Heart left ventricle (tissue), 16 donors: ENCODE measurements at regions of chr6 and their contacts with region 1.

Region 1: GRCh38 chr6:165662749-165663282 is at the start of gene PDE10A:
- DNase-seq: peak; percentile 81 to 88 (median 84)
- ATAC-seq: peak; percentile 52 to 83 (median 73)
- H3K4me3 ChIP-seq: peak within 1 kb of the TSS; percentile 66 to 93 (median 80)
- H3K27ac ChIP-seq: peak within 1 kb of the TSS; percentile 57 to 98 (median 94)
- H3K4me1 ChIP-seq: peaks cover 0 to 48% (median 20%) of the 10 kb centered on the region in 12 donors
- H3K27me3 ChIP-seq: peaks cover 0 to 51% (median 19%) of the 10 kb centered on the region in 9 donors
- CTCF ChIP-seq: peak in 4 of 12 donors; percentile 14 to 26 (median 18)
- POLR2A ChIP-seq: peak in 1 of 2 donors; percentile 24
- total RNA-seq, gene PDE10A: 8.6 to 22.4 (median 12.8) TPM

Region 2: DNA sequence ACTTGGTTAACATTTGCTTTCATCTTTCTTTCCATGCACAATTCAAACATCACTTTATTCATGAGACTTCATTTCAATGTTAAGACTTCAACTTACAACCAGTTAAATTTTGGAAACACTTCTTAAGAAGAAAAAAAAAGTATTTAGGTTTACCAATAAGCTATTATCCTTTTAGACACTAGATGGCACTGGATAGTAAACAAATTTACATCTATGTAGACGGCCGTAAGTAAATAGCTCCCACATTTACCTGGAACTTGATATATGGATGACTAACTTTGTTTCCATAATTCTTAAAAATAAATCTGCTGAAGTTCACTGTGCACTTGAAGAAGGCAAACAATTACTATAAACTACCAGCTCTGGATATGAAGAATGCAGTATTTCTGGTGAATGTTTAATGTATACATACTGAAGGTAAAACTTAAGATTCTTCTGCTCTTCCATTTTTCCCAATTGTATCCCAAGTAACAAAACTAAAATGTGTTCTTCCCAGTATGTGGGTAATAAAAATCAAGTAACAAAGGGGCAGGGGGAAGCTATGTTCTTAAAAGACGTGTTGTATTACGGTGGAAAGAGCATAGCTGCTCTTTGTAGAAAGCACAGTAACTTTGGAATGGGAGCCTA is 222.8 kb before region 1 on chr6:
- intact Hi-C with region 1: loop called in 8 of 10 experiments (anchors 2 to 10 kb)
- DNase-seq: no peak
- ATAC-seq: peak in 2 of 4 donors; percentile 48 to 63
- H3K4me3 ChIP-seq: no peak overlapping the region
- H3K27ac ChIP-seq: no peak overlapping the region
- H3K4me1 ChIP-seq: peaks cover 0 to 5% (median 0%) of the 10 kb centered on the region in 12 donors
- H3K27me3 ChIP-seq: no peaks in the 10 kb centered on the region
- CTCF ChIP-seq: peak; percentile 49 to 78 (median 68)
- POLR2A ChIP-seq: no peak

Region 3: DNA sequence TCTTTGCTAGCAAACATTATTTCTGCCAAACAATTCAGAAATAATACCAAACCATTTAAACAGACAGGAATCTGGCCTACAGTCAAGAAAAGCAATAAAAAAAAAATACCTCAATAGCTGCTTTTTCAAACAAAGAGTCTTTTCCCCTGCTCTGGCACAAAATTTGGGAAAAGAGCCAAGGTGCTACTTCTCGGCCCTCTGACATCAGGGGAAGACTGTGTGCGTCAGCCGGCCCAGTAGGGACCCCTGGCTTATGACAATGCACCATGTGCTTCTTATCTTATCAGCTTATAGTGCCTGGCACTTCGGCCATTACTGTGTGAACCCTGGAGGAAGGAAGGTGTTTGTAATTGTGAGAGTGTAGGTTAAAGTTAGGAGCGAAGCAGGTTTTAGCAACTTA is 89.1 kb before region 1 on chr6:
- intact Hi-C with region 1: loop called in 5 of 10 experiments (anchors 5 kb)
- DNase-seq: peak; percentile 68 to 88 (median 79)
- ATAC-seq: peak; percentile 88 to 98 (median 95)
- H3K4me3 ChIP-seq: no peak overlapping the region
- H3K27ac ChIP-seq: peak overlapping the region in 11 of 12 donors; percentile 9 to 68 (median 44)
- H3K4me1 ChIP-seq: peaks cover 0 to 35% (median 21%) of the 10 kb centered on the region in 12 donors
- H3K27me3 ChIP-seq: no peaks in the 10 kb centered on the region
- CTCF ChIP-seq: peak in 1 of 12 donors; percentile 23
- POLR2A ChIP-seq: no peak

Region 4: GRCh38 chr6:165585060-165585459 is 77.8 kb before region 1 on chr6:
- intact Hi-C with region 1: no loop called
- DNase-seq: no peak
- ATAC-seq: no peak
- H3K4me3 ChIP-seq: no peak overlapping the region
- H3K27ac ChIP-seq: no peak overlapping the region
- H3K4me1 ChIP-seq: peaks cover 0 to 2% (median 0%) of the 10 kb centered on the region in 12 donors
- H3K27me3 ChIP-seq: no peaks in the 10 kb centered on the region
- CTCF ChIP-seq: no peak
- POLR2A ChIP-seq: no peak

Region 5: GRCh38 chr6:165695722-165696515 is 33.1 kb after region 1 on chr6:
- intact Hi-C with region 1: loop called in 2 of 10 experiments (anchors 2 to 5 kb)
- DNase-seq: no peak
- ATAC-seq: no peak
- H3K4me3 ChIP-seq: no peak overlapping the region
- H3K27ac ChIP-seq: peak overlapping the region in 3 of 12 donors; percentile 44 to 62 (median 61)
- H3K4me1 ChIP-seq: peaks cover 0 to 31% (median 9%) of the 10 kb centered on the region in 12 donors
- H3K27me3 ChIP-seq: no peaks in the 10 kb centered on the region
- CTCF ChIP-seq: no peak
- POLR2A ChIP-seq: no peak

Region 6: GRCh38 chr6:165729307-165729936 is 66.6 kb after region 1 on chr6:
- intact Hi-C with region 1: loop called in 1 of 10 experiments (anchors 5 kb)
- DNase-seq: no peak
- ATAC-seq: peak in 2 of 4 donors; percentile 51 to 63
- H3K4me3 ChIP-seq: no peak overlapping the region
- H3K27ac ChIP-seq: no peak overlapping the region
- H3K4me1 ChIP-seq: peaks cover 0 to 5% (median 0%) of the 10 kb centered on the region in 12 donors
- H3K27me3 ChIP-seq: no peaks in the 10 kb centered on the region
- CTCF ChIP-seq: peak; percentile 71 to 92 (median 86)
- POLR2A ChIP-seq: no peak

Region 7: DNA sequence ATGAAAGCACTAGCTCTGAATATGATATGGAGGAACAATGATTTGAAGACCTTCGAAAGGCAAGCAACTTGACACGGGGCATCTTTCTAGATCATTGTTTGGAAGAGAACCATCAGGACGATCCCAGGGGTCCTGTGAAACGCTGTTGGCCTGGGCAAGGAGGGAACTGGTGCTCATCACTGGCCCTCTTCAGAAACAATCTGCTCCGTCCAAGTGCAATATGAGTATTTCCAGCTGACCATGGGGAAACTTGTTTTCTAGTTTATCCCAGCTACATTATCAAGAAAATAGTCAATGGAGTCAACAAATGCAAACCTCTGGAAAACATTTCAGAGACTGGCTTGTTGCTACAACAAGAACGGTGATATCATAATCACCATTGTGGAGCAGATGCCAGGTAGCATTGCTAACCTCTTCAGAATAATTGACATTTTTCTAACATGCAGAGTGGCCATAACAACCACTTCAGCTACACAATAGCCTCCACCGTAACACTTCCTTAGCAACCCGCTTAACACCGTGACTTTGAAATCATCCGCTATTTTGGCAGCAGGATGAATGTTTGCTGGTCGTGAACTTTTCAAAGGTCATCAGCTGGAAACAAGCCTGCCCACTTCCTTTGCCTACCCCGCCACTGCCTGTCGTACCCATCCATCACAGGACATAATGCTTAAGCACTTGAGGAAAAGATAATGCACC is 112.2 kb after region 1 on chr6:
- intact Hi-C with region 1: loop called in 3 of 10 experiments (anchors 2 to 5 kb)
- DNase-seq: peak in 4 of 5 donors; percentile 69 to 74 (median 72)
- ATAC-seq: peak; percentile 97 to 99 (median 98)
- H3K4me3 ChIP-seq: no peak overlapping the region
- H3K27ac ChIP-seq: peak overlapping the region; percentile 25 to 76 (median 64)
- H3K4me1 ChIP-seq: peaks cover 0 to 25% (median 8%) of the 10 kb centered on the region in 12 donors
- H3K27me3 ChIP-seq: no peaks in the 10 kb centered on the region
- CTCF ChIP-seq: no peak
- POLR2A ChIP-seq: no peak